Panc1 (cell line): ENCODE measurements at regions of chr1 and their contacts with region 1.

Region 1: GRCh38 chr1:89780721-89781120 is 40.1 kb upstream of the LRRC8D start:
- DNase-seq: peak; percentile 48
- ATAC-seq: peak; percentile 84
- H3K4me3 ChIP-seq: no peak overlapping the region
- H3K27ac ChIP-seq: no peak overlapping the region
- H3K4me1 ChIP-seq: no peaks in the 10 kb centered on the region
- H3K27me3 ChIP-seq: peaks cover 2% of the 10 kb centered on the region; the same call in 1 of the 2 replicates
- CTCF ChIP-seq: peak; percentile 67

Region 2: DNA sequence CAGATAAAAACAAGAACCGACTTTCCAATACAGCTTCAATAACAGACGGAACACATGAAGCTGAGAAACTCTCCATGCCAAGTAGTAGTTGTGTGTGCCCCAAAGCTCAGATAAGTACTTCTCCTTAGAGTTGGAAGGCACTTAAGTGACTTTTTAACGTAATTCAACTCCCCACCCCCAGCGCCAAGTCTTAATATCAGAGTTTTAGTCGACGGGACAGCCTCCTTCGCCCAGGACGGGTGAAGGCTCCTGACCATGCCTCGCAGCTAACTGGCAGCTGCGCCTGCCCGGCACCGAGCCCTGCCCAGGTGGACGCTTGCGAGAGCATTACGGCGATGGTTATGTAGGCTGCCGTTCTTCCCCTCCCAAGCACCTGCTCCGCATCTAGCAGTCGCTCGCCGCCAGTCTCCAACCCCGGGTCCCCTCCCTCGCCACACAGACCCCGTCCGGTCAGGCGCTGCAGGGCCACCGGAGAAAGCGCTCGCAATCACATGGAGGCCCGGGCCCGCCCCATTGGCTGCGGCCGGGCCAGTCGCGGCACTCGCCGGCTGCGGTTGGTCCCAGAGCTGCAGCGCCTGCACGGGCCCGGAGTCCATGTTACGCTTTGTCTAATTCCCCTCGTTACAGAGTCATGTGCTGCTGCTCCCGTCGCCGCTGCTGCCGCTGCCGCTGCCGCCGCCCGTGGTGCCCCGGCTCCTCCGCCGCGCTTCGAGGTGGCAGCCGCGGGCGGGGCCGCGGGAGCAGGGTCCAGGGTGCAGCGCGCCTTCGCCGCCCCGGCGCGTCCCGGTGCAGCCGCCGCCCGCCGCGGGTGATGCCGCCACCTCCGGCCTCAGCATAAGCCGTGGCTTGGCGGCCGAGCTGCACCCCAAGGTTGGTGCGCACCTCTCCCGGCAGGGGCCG is 40.0 kb after region 1 on chr1 and contains the start of gene LRRC8D:
- CTCF ChIA-PET with region 1: interaction called, 10 read pairs
- POLR2A ChIA-PET with region 1: no interaction called
- in situ Hi-C with region 1: no loop called
- intact Hi-C with region 1: no loop called
- DNase-seq: no peak
- ATAC-seq: peak; percentile 98
- H3K4me3 ChIP-seq: peak within 1 kb of the TSS; percentile 66 to 76
- H3K27ac ChIP-seq: peak within 1 kb of the TSS; percentile 81
- H3K4me1 ChIP-seq: peaks cover 24% of the 10 kb centered on the region
- H3K27me3 ChIP-seq: no peaks in the 10 kb centered on the region; the same call in 1 of the 2 replicates
- CTCF ChIP-seq: no peak
- total RNA-seq, gene LRRC8D: 43.3 TPM